IMR-90 (cell line): ENCODE measurements at regions of chr5 and their contacts with region 1.

Region 1: DNA sequence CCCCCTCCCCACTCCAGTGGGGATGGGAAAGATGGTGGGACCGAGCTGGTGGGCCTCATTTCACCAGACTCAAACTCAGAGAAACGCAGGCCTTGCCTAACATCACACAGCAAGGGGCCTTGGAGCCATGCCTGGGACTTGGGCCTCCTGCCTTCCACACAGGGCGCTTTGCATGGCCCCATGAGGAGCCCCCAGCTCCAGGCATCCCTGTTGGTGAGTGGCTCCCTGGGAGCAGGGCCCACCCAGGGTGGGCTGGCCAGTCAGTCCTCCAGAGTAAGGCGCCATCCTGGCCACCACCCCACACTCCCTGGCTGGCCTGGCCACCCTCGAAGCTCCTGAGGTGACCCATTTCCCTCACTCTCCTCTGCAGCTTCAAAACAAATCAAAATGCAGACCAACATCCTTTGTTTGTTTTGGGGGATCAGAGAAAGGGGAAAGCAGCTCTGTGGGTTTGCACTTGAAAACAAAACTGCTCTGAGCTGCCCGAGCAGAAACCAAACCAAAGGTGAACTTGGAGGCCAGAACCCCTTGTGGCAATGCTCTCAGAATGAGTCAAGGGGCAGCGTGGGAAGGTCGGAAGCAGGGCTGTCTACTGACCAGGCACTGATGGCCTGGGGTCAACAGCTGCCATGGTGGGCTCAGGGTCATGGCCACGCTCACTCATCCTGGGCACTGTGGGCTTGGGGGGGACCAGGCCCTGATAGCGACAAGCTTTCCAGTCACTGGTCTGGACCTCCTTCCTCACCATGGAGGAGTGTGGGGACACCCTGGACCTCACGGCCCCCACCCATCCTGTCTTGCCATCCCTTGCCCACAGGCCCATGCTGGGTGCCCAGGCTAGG is 37.0 kb upstream of the VDAC1 start:
- DNase-seq: no peak
- ATAC-seq: no peak
- H3K4me3 ChIP-seq: no peak overlapping the region
- H3K27ac ChIP-seq: no peak overlapping the region
- H3K4me1 ChIP-seq: no peaks in the 10 kb centered on the region
- H3K27me3 ChIP-seq: peaks cover 24% of the 10 kb centered on the region
- CTCF ChIP-seq: no peak
- POLR2A ChIP-seq: no peak
- RAD21 ChIP-seq: no peak

Region 2: GRCh38 chr5:134026521-134027268 is 15.1 kb before region 1 on chr5:
- CTCF ChIA-PET with region 1: interaction called, 15 read pairs
- POLR2A ChIA-PET with region 1: no interaction called
- dilution Hi-C with region 1: no loop called
- in situ Hi-C with region 1: no loop called
- intact Hi-C with region 1: no loop called
- DNase-seq: peak; percentile 63
- ATAC-seq: peak; percentile 52
- H3K4me3 ChIP-seq: no peak overlapping the region
- H3K27ac ChIP-seq: no peak overlapping the region
- H3K4me1 ChIP-seq: peaks cover 6% of the 10 kb centered on the region
- H3K27me3 ChIP-seq: peaks cover 34% of the 10 kb centered on the region
- CTCF ChIP-seq: peak; percentile 44
- POLR2A ChIP-seq: no peak
- RAD21 ChIP-seq: peak; percentile 37

Region 3: GRCh38 chr5:134125039-134126015 is 83.5 kb after region 1 on chr5:
- CTCF ChIA-PET with region 1: interaction called, 10 read pairs
- POLR2A ChIA-PET with region 1: no interaction called
- dilution Hi-C with region 1: no loop called
- in situ Hi-C with region 1: no loop called
- intact Hi-C with region 1: no loop called
- DNase-seq: peak; percentile 96
- ATAC-seq: peak; percentile 75
- H3K4me3 ChIP-seq: no peak overlapping the region
- H3K27ac ChIP-seq: peak overlapping the region; percentile 25
- H3K4me1 ChIP-seq: peaks cover 14% of the 10 kb centered on the region
- H3K27me3 ChIP-seq: no peaks in the 10 kb centered on the region
- CTCF ChIP-seq: no peak
- POLR2A ChIP-seq: 0 out of 2 replicates have a peak, but pooled peaks have one; percentile 24
- RAD21 ChIP-seq: no peak

Region 4: GRCh38 chr5:134145779-134146581 is 104.2 kb after region 1 on chr5:
- CTCF ChIA-PET with region 1: interaction called, 47 read pairs
- POLR2A ChIA-PET with region 1: no interaction called
- dilution Hi-C with region 1: no loop called
- in situ Hi-C with region 1: no loop called
- intact Hi-C with region 1: loop called (anchors 1 kb)
- DNase-seq: peak; percentile 64
- ATAC-seq: peak; percentile 77
- H3K4me3 ChIP-seq: no peak overlapping the region
- H3K27ac ChIP-seq: peak overlapping the region; percentile 22; the same call in 1 of the 2 replicates
- H3K4me1 ChIP-seq: peaks cover 17% of the 10 kb centered on the region
- H3K27me3 ChIP-seq: no peaks in the 10 kb centered on the region
- CTCF ChIP-seq: peak; percentile 78
- POLR2A ChIP-seq: no peak
- RAD21 ChIP-seq: peak; percentile 66

Region 5: GRCh38 chr5:134289509-134290113 is 247.8 kb after region 1 on chr5:
- CTCF ChIA-PET with region 1: no interaction called
- POLR2A ChIA-PET with region 1: no interaction called
- dilution Hi-C with region 1: no loop called
- in situ Hi-C with region 1: loop called (anchors 25 kb)
- intact Hi-C with region 1: loop called (anchors 1 kb)
- DNase-seq: peak; percentile 83
- ATAC-seq: peak; percentile 99
- H3K4me3 ChIP-seq: no peak overlapping the region
- H3K27ac ChIP-seq: no peak overlapping the region
- H3K4me1 ChIP-seq: no peaks in the 10 kb centered on the region
- H3K27me3 ChIP-seq: no peaks in the 10 kb centered on the region; the same call in 1 of the 2 replicates
- CTCF ChIP-seq: peak; percentile 92
- POLR2A ChIP-seq: peak; percentile 63
- RAD21 ChIP-seq: peak; percentile 100

Region 6: DNA sequence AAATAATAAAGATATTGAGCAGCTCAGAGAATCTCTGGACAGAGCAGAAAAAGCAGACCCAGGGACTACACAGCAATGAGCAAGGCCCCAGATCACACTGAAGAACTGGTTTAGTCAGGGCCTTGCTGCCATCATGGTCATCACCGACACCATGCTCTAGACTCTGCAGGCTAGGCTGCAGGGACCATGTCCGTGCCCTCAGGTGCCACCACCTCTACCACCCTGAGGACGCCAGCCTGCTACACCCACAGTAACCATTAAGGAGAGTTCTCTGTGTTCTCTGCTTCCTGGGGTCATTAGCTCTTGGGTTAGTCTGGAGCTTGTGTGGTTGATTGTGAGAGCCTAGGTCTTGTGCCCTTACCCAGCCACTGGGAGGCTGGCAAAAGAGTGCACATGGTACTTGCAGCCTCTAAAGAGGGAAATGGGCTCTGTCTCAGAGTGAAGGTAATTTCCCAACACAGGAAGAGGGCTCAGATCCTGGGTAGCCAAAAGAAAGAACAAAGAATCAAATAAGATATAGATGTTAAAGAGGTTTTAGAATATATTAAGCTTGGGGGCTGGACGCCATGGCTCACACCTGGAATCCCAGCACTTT is 451.8 kb after region 1 on chr5:
- CTCF ChIA-PET with region 1: no interaction called
- POLR2A ChIA-PET with region 1: no interaction called
- dilution Hi-C with region 1: no loop called
- in situ Hi-C with region 1: no loop called
- intact Hi-C with region 1: no loop called
- DNase-seq: no peak
- ATAC-seq: no peak
- H3K4me3 ChIP-seq: no peak overlapping the region
- H3K27ac ChIP-seq: no peak overlapping the region
- H3K4me1 ChIP-seq: no peaks in the 10 kb centered on the region
- H3K27me3 ChIP-seq: no peaks in the 10 kb centered on the region
- CTCF ChIP-seq: no peak
- POLR2A ChIP-seq: no peak
- RAD21 ChIP-seq: no peak